ENCODE measurements at regions of chr14 and their contacts with region 1.

Region 1: GRCh38 chr14:85195872-85196477 is 334.0 kb upstream of the FLRT2 start:
- DNase-seq: no peak
- ATAC-seq: no peak

Region 2: DNA sequence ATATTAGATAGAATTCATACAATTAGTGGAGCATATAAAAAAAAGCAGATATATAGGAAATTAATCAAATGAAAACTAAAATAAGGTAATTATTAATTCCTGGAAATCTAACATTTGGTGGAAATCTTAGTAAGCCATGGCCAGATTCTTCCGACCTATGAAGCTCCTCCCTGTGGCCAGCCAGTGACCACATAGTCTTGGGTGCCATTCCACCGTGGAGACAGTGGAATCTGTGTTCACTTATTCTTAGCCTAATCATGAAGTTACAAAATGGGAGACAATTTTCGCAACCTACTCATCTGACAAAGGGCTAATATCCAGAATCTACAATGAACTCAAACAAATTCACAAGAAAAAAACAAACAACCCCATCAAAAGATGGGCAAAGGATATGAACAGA is 92.1 kb after region 1 on chr14:
- intact Hi-C with region 1: no loop called
- DNase-seq: no peak
- ATAC-seq: no peak

Region 3: GRCh38 chr14:85528080-85528896 is 332.3 kb after region 1 on chr14:
- intact Hi-C with region 1: loop called (anchors 5 kb)
- DNase-seq: no peak
- ATAC-seq: peak; percentile 64

Region 4: DNA sequence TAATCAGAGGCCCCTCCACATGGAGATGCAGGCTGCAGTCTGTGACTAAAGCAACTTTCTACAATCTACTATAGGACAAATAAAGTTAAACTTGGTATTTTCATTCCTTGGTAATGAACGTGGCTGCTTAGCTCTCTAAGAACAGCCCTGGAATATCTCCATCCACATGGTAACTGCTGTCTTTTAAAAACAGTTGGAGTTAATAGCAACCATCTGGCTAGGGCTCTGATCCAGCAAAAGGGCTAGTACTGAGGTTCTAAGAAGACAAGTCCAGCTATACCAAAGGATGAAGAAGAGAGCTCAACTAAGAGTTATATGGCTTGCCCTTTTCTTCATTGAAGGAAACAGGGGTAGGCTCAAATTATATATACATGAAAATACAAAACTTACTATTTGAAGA is 1254.1 kb after region 1 on chr14:
- intact Hi-C with region 1: no loop called
- DNase-seq: no peak
- ATAC-seq: no peak